Activated naive CD4-positive, alpha-beta T cell treated with anti-CD3 and anti-CD28 coated beads for 36 hours (primary cell): ENCODE measurements at regions of chr17 and their contacts with region 1.

Region 1: DNA sequence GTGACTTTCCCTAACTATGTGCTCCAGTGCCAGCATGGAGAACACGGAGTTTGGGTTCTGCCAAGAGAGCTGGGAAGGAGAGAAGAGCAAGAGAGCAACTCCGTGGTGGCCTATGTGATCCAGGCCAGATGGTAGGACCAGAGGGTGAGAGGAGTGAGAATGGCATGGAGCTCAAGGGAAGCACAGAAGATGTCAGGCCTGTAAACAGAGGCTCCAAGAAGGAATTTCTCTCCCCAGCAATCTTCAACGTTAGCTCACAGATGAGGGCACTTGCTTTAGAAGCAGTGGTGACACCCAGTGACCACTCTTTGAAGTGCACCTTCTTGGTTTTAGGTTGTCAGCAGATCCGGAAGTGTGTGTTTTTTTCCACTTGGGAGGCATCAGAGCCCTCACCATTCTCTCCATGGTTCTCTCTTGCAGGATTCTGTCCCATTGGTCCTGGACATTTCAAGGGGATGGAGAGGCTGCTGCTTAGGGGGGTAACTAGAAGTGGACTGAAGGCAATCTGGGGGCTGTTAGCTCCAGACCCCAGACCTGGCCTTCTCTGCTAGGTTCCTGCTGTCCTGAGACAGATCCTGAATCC is 18.1 kb upstream of the TMEM98 start:
- DNase-seq: peak; percentile 76
- H3K4me3 Mint-ChIP-seq: no peak overlapping the region
- H3K27ac Mint-ChIP-seq: no peak overlapping the region
- H3K4me1 Mint-ChIP-seq: no peaks in the 10 kb centered on the region
- H3K27me3 Mint-ChIP-seq: peaks cover 7% of the 10 kb centered on the region

Region 2: DNA sequence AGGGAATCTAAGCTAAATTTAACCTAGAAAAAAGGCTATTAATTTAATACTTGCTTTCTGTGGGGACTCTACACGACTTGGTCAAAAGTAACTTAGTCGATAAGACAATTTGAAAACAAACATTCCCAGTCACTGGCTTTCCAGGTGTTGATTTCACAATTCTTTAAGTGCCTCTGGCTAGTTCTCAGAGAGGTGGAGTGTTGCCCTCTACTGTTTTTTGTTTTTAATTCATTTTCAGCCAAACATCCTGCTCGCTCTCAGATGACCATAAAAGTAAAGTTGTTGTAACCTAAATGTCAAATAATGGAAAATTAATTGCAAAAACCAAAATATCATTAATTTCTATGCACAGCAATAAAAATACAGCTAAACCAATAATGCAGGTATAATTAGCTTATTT is 140.0 kb before region 1 on chr17:
- CTCF ChIA-PET with region 1: no interaction called
- intact Hi-C with region 1: no loop called
- DNase-seq: no peak
- H3K4me3 Mint-ChIP-seq: no peak overlapping the region
- H3K27ac Mint-ChIP-seq: no peak overlapping the region
- H3K4me1 Mint-ChIP-seq: no peaks in the 10 kb centered on the region
- H3K27me3 Mint-ChIP-seq: no peaks in the 10 kb centered on the region

Region 3: GRCh38 chr17:32947736-32948135 is 37.9 kb after region 1 on chr17:
- CTCF ChIA-PET with region 1: interaction called, 10 read pairs
- intact Hi-C with region 1: no loop called
- DNase-seq: no peak
- H3K4me3 Mint-ChIP-seq: no peak overlapping the region
- H3K27ac Mint-ChIP-seq: no peak overlapping the region
- H3K4me1 Mint-ChIP-seq: no peaks in the 10 kb centered on the region
- H3K27me3 Mint-ChIP-seq: no peaks in the 10 kb centered on the region